Activated CD4-positive, alpha-beta memory T cell treated with anti-CD3 and anti-CD28 coated beads for 36 hours (primary cell): ENCODE measurements at regions of chr10 and their contacts with region 1.

Region 1: GRCh38 chr10:93376372-93377293 is 105.5 kb downstream of the MYOF start:
- DNase-seq: peak; percentile 34
- H3K4me3 Mint-ChIP-seq: no peak overlapping the region
- H3K27ac Mint-ChIP-seq: peak overlapping the region; percentile 34
- H3K4me1 Mint-ChIP-seq: peaks cover 41% of the 10 kb centered on the region
- H3K27me3 Mint-ChIP-seq: no peaks in the 10 kb centered on the region

Region 2: DNA sequence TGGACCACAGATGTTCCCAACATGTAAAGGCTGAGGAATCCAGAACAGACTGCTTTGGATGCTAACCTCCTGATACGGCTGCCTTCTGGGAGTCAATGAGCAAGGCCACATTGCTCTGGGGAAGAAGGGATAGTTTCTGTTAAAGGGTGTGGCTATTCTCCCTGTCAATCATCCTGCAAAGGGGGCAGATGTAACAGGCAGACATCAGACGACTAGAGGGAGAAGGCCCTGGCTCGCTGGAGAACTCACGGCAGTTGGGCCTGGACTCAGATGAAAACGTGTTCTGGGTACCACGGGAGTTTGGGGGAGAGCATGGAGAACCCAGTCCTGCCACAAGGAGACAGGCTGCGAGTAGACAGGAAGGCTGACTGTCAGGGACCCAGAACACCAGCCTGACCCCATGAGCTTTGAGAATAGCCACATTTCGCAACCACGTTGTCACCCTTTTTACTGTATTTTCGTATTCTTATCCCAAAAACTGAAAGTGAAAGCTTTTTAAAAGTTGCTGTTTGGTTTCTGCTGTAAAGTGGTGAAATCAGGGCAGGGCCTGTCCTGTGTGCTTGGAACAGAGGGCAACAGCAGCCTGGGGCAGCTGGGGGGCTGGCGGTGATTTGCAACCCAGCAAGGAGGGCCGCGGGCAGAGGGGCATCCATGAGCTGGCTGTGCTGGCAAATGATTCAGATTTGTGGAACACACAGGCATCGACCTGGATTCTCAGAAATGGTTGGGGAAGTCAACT is 10.2 kb after region 1 on chr10:
- CTCF ChIA-PET with region 1: interaction called, 22 read pairs
- POLR2A ChIA-PET with region 1: interaction called, 3 read pairs
- intact Hi-C with region 1: no loop called
- DNase-seq: peak; percentile 34
- H3K4me3 Mint-ChIP-seq: no peak overlapping the region
- H3K27ac Mint-ChIP-seq: peak overlapping the region; percentile 78
- H3K4me1 Mint-ChIP-seq: peaks cover 22% of the 10 kb centered on the region
- H3K27me3 Mint-ChIP-seq: no peaks in the 10 kb centered on the region

Region 3: GRCh38 chr10:93461807-93462178 is 85.2 kb after region 1 on chr10:
- CTCF ChIA-PET with region 1: interaction called, 65 read pairs
- POLR2A ChIA-PET with region 1: interaction called, 17 read pairs
- intact Hi-C with region 1: loop called (anchors 1 kb)
- DNase-seq: no peak
- H3K4me3 Mint-ChIP-seq: no peak overlapping the region
- H3K27ac Mint-ChIP-seq: peak overlapping the region; percentile 86
- H3K4me1 Mint-ChIP-seq: peaks cover 35% of the 10 kb centered on the region
- H3K27me3 Mint-ChIP-seq: no peaks in the 10 kb centered on the region

Region 4: GRCh38 chr10:93496322-93497041 is 119.8 kb after region 1 on chr10 and contains the start of gene CEP55:
- CTCF ChIA-PET with region 1: interaction called, 422 read pairs
- POLR2A ChIA-PET with region 1: interaction called, 12 read pairs
- intact Hi-C with region 1: loop called (anchors 1 kb)
- DNase-seq: peak; percentile 98
- H3K4me3 Mint-ChIP-seq: peak within 1 kb of the TSS; percentile 90
- H3K27ac Mint-ChIP-seq: peak within 1 kb of the TSS; percentile 74
- H3K4me1 Mint-ChIP-seq: peaks cover 27% of the 10 kb centered on the region
- H3K27me3 Mint-ChIP-seq: no peaks in the 10 kb centered on the region
- total RNA-seq, gene CEP55: 88.0 to 91.3 TPM

Region 5: GRCh38 chr10:93515071-93516005 is 138.7 kb after region 1 on chr10:
- CTCF ChIA-PET with region 1: interaction called, 193 read pairs
- POLR2A ChIA-PET with region 1: no interaction called
- intact Hi-C with region 1: loop called (anchors 1 kb)
- DNase-seq: no peak
- H3K4me3 Mint-ChIP-seq: no peak overlapping the region
- H3K27ac Mint-ChIP-seq: no peak overlapping the region
- H3K4me1 Mint-ChIP-seq: peaks cover 7% of the 10 kb centered on the region
- H3K27me3 Mint-ChIP-seq: no peaks in the 10 kb centered on the region